ENCODE measurements at regions of chr3 and their contacts with region 1.

Region 1: GRCh38 chr3:113287803-113288648 is 76.7 kb downstream of the BOC start:
- DNase-seq: no peak
- ATAC-seq: peak; percentile 65
- H3K4me3 ChIP-seq: no peak overlapping the region
- H3K27ac ChIP-seq: no peak overlapping the region
- H3K4me1 ChIP-seq: no peaks in the 10 kb centered on the region
- H3K27me3 ChIP-seq: no peaks in the 10 kb centered on the region
- CTCF ChIP-seq: peak; percentile 97 to 100 (median 99)
- EP300 ChIP-seq: no peak
- POLR2A ChIP-seq: no peak
- RAD21 ChIP-seq: peak; percentile 97

Region 2: DNA sequence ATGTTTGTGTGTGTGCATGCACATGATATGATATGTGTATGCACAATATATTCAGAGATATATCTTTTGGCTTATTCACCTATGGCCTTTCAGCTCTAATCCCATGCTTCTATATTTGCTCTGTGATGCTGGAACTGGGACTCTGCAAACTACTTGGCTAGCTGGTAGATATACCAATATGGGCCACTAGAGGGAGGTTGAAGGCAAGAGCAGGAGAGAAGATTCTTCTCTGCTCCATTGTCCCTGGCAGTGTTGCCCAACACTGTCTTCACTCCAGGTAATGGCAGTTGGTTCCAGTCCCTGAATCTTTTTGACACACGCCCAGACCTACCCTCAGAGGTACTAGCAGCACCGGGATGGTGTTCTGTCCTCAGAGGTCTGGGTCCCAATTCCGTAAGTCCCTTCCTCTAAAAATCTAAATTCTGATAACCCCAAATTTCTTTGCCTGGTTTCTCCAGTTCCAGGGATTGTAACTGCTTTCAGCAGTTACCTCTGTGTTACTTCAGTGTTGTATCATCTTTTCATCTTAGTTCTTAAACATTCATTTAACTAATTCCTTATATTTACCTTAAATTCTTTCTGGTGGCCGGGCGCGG is 252.5 kb before region 1 on chr3:
- CTCF ChIA-PET with region 1: interaction called, 22 read pairs
- POLR2A ChIA-PET with region 1: no interaction called
- RAD21 ChIA-PET with region 1: interaction called, 6 read pairs
- SMC1A ChIA-PET with region 1: interaction called, 7 read pairs
- in situ Hi-C with region 1: no loop called
- intact Hi-C with region 1: no loop called
- DNase-seq: no peak
- ATAC-seq: peak; percentile 95
- H3K4me3 ChIP-seq: no peak overlapping the region
- H3K27ac ChIP-seq: no peak overlapping the region
- H3K4me1 ChIP-seq: no peaks in the 10 kb centered on the region
- H3K27me3 ChIP-seq: no peaks in the 10 kb centered on the region
- CTCF ChIP-seq: peak; percentile 72 to 92 (median 85)
- EP300 ChIP-seq: no peak
- POLR2A ChIP-seq: no peak
- RAD21 ChIP-seq: peak; percentile 61

Region 3: GRCh38 chr3:113043686-113044085 is 244.3 kb before region 1 on chr3:
- CTCF ChIA-PET with region 1: interaction called, 12 read pairs
- POLR2A ChIA-PET with region 1: no interaction called
- RAD21 ChIA-PET with region 1: interaction called, 3 read pairs
- SMC1A ChIA-PET with region 1: interaction called, 10 read pairs
- in situ Hi-C with region 1: no loop called
- intact Hi-C with region 1: no loop called
- DNase-seq: no peak
- ATAC-seq: no peak
- H3K4me3 ChIP-seq: no peak overlapping the region
- H3K27ac ChIP-seq: no peak overlapping the region
- H3K4me1 ChIP-seq: no peaks in the 10 kb centered on the region
- H3K27me3 ChIP-seq: no peaks in the 10 kb centered on the region
- CTCF ChIP-seq: no peak
- EP300 ChIP-seq: no peak
- POLR2A ChIP-seq: no peak
- RAD21 ChIP-seq: no peak

Region 4: GRCh38 chr3:113051302-113051711 is 236.7 kb before region 1 on chr3:
- CTCF ChIA-PET with region 1: interaction called, 24 read pairs
- POLR2A ChIA-PET with region 1: no interaction called
- RAD21 ChIA-PET with region 1: interaction called, 12 read pairs
- SMC1A ChIA-PET with region 1: interaction called, 19 read pairs
- in situ Hi-C with region 1: loop called (anchors 5 kb)
- intact Hi-C with region 1: loop called (anchors 1 kb)
- DNase-seq: peak; percentile 63
- ATAC-seq: peak; percentile 99
- H3K4me3 ChIP-seq: no peak overlapping the region
- H3K27ac ChIP-seq: no peak overlapping the region
- H3K4me1 ChIP-seq: peaks cover 3% of the 10 kb centered on the region
- H3K27me3 ChIP-seq: no peaks in the 10 kb centered on the region
- CTCF ChIP-seq: peak; percentile 85 to 93 (median 93); a peak in 5 of 6 replicates
- EP300 ChIP-seq: peak; percentile 33 to 45; a peak in 1 of 4 replicates
- POLR2A ChIP-seq: no peak
- RAD21 ChIP-seq: peak; percentile 93

Region 5: GRCh38 chr3:113057117-113057516 is 230.9 kb before region 1 on chr3:
- CTCF ChIA-PET with region 1: interaction called, 24 read pairs
- POLR2A ChIA-PET with region 1: no interaction called
- RAD21 ChIA-PET with region 1: interaction called, 6 read pairs
- SMC1A ChIA-PET with region 1: interaction called, 19 read pairs
- in situ Hi-C with region 1: loop called (anchors 5 kb)
- intact Hi-C with region 1: no loop called
- DNase-seq: peak; percentile 49
- ATAC-seq: peak; percentile 71
- H3K4me3 ChIP-seq: no peak overlapping the region
- H3K27ac ChIP-seq: no peak overlapping the region; the same call in 1 of the 2 replicates
- H3K4me1 ChIP-seq: peaks cover 20% of the 10 kb centered on the region
- H3K27me3 ChIP-seq: no peaks in the 10 kb centered on the region
- CTCF ChIP-seq: no peak
- EP300 ChIP-seq: peak in 1 of 2 experiments; percentile 22; a peak in 1 of 4 replicates
- POLR2A ChIP-seq: no peak
- RAD21 ChIP-seq: no peak

Region 6: DNA sequence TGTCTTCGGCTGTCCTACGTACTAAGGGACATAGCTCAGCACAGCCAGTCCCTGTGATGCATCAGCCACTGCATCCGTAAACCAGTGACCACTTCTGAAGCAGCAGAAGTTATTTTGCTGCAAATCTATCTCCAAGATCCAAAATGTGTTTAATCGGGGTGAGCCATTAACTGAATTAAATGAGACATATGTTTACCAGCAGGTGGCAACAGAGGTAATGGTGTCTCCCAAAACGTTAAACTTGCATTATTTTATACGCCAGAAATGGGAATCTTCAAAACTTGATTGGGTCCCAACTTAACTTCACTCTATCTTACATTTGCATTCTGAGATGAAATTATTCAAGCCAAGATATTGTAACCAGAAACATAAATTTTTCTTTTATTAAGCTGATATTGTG is 152.0 kb before region 1 on chr3:
- CTCF ChIA-PET with region 1: interaction called, 82 read pairs
- POLR2A ChIA-PET with region 1: no interaction called
- RAD21 ChIA-PET with region 1: interaction called, 31 read pairs
- SMC1A ChIA-PET with region 1: interaction called, 47 read pairs
- in situ Hi-C with region 1: loop called (anchors 5 kb)
- intact Hi-C with region 1: loop called (anchors 1 kb)
- DNase-seq: no peak
- ATAC-seq: 0 out of 3 replicates have a peak, but pooled peaks have one; percentile 31
- H3K4me3 ChIP-seq: no peak overlapping the region
- H3K27ac ChIP-seq: no peak overlapping the region
- H3K4me1 ChIP-seq: no peaks in the 10 kb centered on the region
- H3K27me3 ChIP-seq: no peaks in the 10 kb centered on the region
- CTCF ChIP-seq: peak; percentile 40 to 42 (median 42); a peak in 4 of 6 replicates
- EP300 ChIP-seq: no peak
- POLR2A ChIP-seq: no peak
- RAD21 ChIP-seq: peak; percentile 40; the same call in 1 of the 2 replicates

Region 7: DNA sequence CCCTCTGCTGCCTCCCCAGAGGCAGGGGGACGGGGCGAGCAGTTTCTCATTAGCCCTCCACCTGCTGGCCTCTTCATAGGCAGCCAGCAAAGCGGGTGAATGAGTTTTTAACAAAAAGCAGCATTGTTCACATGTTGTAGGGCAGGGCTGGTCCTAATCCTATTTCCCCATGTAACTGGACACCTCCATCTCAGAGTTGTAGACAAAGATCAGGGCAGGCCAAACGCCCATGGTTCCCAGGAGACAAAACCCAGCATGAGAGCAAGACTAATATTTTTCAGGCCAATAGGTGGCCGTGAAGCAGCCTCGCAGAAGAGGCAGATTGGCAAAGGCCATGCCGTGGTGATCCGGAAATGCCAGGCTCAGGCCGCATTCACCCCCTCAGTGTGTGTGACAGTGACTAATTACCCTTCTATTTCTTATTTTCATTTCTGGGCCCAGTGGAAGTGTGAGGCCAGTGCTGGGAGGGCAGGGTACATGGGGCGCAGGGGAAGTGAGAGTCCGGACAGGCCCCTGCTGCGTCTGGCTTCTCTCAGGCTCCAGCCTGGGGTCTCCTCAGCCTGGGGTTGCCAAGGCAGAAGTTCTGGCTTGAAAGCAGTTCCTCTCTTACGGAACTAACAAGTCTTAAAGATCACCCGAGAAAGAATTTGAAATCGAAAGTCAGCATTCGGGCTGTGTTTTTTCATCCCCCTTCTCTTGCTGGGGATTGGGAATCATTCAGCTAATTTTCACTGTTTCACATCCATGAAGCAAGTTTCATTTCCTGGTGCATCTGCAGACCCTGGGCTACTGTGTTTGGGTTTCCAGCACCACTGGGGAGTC is 11.9 kb before region 1 on chr3:
- CTCF ChIA-PET with region 1: interaction called, 34 read pairs
- POLR2A ChIA-PET with region 1: no interaction called
- RAD21 ChIA-PET with region 1: interaction called, 5 read pairs
- SMC1A ChIA-PET with region 1: interaction called, 19 read pairs
- in situ Hi-C with region 1: no loop called
- intact Hi-C with region 1: no loop called
- DNase-seq: peak; percentile 25
- ATAC-seq: peak; percentile 87
- H3K4me3 ChIP-seq: peak overlapping the region; percentile 31; the same call in 1 of the 2 replicates
- H3K27ac ChIP-seq: peak overlapping the region; percentile 60
- H3K4me1 ChIP-seq: peaks cover 32% of the 10 kb centered on the region
- H3K27me3 ChIP-seq: no peaks in the 10 kb centered on the region
- CTCF ChIP-seq: no peak
- EP300 ChIP-seq: no peak
- POLR2A ChIP-seq: no peak
- RAD21 ChIP-seq: no peak

Region 8: GRCh38 chr3:113441051-113441770 is 153.2 kb after region 1 on chr3 and contains the start of gene CFAP44:
- CTCF ChIA-PET with region 1: no interaction called
- POLR2A ChIA-PET with region 1: no interaction called
- RAD21 ChIA-PET with region 1: no interaction called
- SMC1A ChIA-PET with region 1: no interaction called
- in situ Hi-C with region 1: no loop called
- intact Hi-C with region 1: no loop called
- DNase-seq: no peak
- ATAC-seq: no peak
- H3K4me3 ChIP-seq: no peak within 1 kb of the TSS
- H3K27ac ChIP-seq: no peak within 1 kb of the TSS
- H3K4me1 ChIP-seq: no peaks in the 10 kb centered on the region
- H3K27me3 ChIP-seq: no peaks in the 10 kb centered on the region
- CTCF ChIP-seq: no peak
- EP300 ChIP-seq: no peak
- POLR2A ChIP-seq: no peak
- RAD21 ChIP-seq: no peak
- polyA plus RNA-seq, gene CFAP44: 0.76 to 0.93 TPM

Measured in GM12878 (cell line).